WTC11 (cell line): ENCODE measurements at regions of chr7 and their contacts with region 1.

Region 1: DNA sequence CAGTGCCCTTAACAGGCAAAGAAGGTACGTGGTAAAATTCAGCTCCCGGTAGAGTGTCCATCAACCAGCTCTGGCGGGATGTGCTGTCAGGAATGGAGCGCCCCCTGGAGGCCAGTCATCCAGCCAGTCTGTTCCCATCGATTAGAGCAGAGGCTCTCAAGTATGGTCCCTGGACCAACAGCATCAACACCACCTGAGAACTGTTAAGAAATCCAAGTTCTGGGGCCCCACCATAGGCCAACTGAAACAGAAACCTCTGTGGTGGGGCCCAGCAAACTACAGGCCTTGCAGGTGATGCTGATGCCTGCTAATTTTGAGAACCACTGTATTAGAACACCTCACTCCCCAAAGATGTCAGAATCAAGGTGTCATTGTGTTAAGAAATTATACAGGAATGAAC is 109.2 kb downstream of the DPY19L1 start:
- DNase-seq: peak; percentile 91
- ATAC-seq: peak; percentile 96
- H3K4me3 Mint-ChIP-seq: no peak overlapping the region
- H3K27ac Mint-ChIP-seq: no peak overlapping the region
- H3K4me1 Mint-ChIP-seq: peaks cover 21% of the 10 kb centered on the region
- H3K27me3 Mint-ChIP-seq: no peaks in the 10 kb centered on the region
- CTCF ChIP-seq: peak; percentile 93

Region 2: DNA sequence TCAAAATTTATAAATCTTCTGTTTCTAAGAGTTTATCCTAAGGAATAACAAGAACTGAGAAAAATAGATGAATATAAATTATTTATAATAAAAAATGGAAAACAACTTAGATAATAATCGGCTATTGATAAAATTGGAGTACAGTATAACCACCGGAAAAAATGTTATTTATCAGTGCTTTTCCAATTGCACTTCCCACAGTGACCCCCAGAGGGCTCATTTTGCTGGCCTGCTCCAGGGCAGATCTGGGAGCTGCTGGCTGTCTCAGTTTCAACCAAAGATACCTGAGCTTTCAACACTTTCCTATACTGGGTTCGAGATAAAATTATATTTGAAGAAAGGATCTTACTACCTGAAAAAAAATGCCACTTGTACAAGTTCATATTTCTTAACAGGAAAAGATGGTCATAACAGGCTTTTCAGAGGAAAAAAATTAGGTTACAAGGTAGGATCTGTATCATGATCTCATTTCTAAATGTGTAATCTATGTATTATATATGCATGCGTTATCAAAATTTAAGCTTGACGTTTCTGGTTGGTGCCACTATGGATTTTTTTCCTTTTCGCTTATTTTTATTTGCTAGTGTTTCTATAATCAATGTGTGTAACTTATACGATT is 104.3 kb before region 1 on chr7:
- CTCF ChIA-PET with region 1: interaction called, 29 read pairs
- POLR2A ChIA-PET with region 1: no interaction called
- DNase-seq: peak; percentile 71
- ATAC-seq: peak; percentile 80
- H3K4me3 Mint-ChIP-seq: no peak overlapping the region
- H3K27ac Mint-ChIP-seq: no peak overlapping the region
- H3K4me1 Mint-ChIP-seq: peaks cover 2% of the 10 kb centered on the region; the same call in 1 of the 2 replicates
- H3K27me3 Mint-ChIP-seq: no peaks in the 10 kb centered on the region
- CTCF ChIP-seq: peak; percentile 88

Region 3: GRCh38 chr7:34939175-34939574 is 11.1 kb after region 1 on chr7:
- CTCF ChIA-PET with region 1: interaction called, 13 read pairs
- POLR2A ChIA-PET with region 1: no interaction called
- DNase-seq: no peak
- ATAC-seq: no peak
- H3K4me3 Mint-ChIP-seq: no peak overlapping the region
- H3K27ac Mint-ChIP-seq: peak overlapping the region; percentile 76
- H3K4me1 Mint-ChIP-seq: peaks cover 44% of the 10 kb centered on the region
- H3K27me3 Mint-ChIP-seq: no peaks in the 10 kb centered on the region
- CTCF ChIP-seq: no peak